ENCODE measurements at regions of chrX and their contacts with region 1.

Region 1: DNA sequence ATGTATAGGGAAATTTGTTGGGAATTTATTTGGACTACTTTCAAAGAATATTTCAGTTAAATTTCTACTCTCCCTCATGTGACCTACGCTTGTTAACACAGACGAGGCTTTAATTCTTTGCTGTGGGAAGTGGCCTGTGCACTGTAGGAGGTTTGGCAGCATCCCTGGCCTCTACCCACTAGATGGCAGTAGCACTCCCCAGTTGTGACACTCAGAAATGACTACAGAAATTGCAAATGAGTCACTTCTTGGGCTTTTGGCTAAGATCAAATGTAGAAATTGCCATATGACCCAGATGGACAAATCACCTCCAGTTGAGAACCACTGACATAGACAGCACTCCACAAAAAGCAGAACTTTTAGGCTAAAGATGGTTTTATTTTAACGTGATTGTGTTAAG is 22.1 kb downstream of the PIR start:
- DNase-seq: peak in 8 of 10 donors; percentile 39 to 90 (median 56)

Region 2: DNA sequence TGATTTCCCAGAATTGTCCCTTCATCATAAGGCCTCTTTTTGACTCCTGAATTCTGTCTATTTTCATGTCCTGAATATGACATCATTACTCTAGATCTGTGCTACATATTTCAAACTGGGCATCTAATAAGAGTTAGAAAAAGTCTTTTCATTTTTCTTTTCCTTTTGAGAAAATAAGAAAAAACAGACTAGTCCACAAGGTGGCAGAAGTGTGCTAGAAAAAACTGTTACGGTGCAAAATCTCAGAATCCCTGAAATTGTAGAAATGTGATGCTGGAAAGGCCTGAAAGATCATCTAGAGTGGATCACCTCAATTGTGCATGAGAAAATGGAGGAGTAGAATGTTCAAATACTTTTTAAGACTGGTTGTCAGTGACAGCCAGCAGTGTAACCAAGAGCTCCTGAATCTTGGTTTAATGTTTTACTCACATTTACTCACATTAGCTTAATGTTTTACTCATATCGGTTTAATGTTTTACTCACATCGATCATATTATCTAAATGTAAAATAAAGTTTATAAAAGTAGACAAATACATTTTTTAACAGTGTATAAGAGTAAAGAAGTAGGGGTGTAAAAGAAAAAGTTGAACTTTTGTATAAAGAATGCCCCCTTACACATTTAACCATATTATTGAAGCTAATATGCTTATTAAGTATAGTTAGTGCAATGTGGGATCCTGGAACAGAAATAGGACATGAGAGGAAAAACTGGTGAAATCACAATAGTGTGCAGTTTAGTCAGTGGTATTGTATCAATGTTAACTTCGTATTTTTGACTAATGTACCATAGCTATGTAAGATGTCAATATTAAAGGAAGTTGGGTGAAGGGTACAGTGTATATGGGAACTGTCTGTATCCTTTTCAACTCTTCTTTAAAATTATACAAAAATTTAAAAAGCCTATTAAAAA is 170.8 kb before region 1 on chrX:
- intact Hi-C with region 1: loop called (anchors 2 kb)
- DNase-seq: no peak

Region 3: DNA sequence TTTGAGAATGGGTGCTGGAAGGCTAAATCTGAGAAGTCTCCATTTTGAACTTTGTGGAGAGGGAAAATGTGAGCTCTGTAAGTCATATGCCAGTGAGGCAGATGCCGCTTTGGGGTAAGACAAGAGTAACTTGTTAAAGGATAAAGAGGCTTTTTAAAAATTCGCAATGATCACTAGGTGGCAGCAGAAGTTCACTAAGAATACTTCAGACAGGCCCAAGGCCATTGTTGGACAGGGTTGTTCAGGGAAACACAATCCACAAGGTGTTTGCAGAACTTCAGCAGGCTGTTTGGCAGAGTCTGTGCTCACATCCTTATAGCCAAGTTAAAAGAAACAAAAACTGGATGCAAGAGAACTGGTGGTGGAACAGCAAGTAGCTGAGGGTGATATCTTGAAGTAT is 122.0 kb before region 1 on chrX:
- intact Hi-C with region 1: loop called (anchors 2 kb)
- DNase-seq: peak in 1 of 10 donors; percentile 18

Measured in posterior cingulate gyrus (tissue), 11 donors.